GM10248 (cell line): ENCODE measurements at regions of chr3 and their contacts with region 1.

Region 1: DNA sequence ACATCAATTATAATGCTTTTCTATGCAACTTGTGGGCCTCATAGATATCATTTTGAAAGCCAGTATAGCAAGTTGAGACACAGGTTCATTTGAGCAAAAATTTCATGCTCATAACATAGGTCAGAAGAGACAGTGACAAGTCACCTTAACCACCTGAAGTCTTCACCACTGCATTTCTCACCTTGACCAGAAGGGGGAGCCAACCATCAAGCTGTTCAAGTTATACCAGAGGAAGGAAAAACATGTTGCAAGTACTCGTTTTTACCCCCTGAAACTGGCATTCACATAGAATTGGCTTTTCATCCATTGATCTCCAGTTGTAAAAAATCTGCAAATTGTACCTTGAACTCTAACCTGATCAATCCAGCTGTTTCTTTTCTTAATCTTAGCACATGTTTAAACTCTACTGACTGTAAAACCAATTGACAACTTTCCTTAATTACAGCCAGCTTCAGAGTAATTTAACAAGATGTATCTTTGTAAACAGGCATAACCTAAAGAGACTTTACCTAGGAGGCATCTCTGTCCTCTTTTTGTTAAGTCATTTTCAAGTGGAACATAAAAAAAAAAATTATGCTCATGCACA is 1.4 kb downstream of the LMOD3 start:
- DNase-seq: peak; percentile 46
- CTCF ChIP-seq: peak; percentile 95

Region 2: GRCh38 chr3:69092030-69092516 is 28.9 kb before region 1 on chr3:
- CTCF ChIA-PET with region 1: interaction called, 19 read pairs
- POLR2A ChIA-PET with region 1: no interaction called
- DNase-seq: no peak
- CTCF ChIP-seq: no peak

Region 3: GRCh38 chr3:69104996-69105719 is 15.8 kb before region 1 on chr3:
- CTCF ChIA-PET with region 1: interaction called, 36 read pairs
- POLR2A ChIA-PET with region 1: no interaction called
- DNase-seq: no peak
- CTCF ChIP-seq: no peak

Region 4: DNA sequence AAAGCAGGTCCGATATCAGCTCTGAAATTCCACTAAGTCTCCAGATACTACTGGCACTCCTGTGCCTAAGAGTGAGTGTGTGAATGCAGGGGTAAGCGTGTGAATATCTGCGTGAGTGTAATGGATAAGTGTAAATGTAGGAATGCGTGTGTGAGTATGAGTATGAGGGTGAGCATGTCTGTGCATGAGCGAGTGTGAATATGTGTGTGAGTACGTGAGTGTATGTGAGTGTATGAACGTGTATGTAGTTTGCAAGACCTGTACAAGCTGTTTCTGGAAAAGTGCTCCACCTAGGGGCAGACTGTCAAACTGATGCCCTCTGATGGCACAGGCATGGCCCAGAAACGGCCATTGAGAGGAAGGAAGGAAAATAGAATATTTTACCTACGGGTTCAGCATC is 289.3 kb after region 1 on chr3:
- CTCF ChIA-PET with region 1: interaction called, 18 read pairs
- POLR2A ChIA-PET with region 1: no interaction called
- DNase-seq: peak; percentile 43
- CTCF ChIP-seq: peak; percentile 90

Region 5: DNA sequence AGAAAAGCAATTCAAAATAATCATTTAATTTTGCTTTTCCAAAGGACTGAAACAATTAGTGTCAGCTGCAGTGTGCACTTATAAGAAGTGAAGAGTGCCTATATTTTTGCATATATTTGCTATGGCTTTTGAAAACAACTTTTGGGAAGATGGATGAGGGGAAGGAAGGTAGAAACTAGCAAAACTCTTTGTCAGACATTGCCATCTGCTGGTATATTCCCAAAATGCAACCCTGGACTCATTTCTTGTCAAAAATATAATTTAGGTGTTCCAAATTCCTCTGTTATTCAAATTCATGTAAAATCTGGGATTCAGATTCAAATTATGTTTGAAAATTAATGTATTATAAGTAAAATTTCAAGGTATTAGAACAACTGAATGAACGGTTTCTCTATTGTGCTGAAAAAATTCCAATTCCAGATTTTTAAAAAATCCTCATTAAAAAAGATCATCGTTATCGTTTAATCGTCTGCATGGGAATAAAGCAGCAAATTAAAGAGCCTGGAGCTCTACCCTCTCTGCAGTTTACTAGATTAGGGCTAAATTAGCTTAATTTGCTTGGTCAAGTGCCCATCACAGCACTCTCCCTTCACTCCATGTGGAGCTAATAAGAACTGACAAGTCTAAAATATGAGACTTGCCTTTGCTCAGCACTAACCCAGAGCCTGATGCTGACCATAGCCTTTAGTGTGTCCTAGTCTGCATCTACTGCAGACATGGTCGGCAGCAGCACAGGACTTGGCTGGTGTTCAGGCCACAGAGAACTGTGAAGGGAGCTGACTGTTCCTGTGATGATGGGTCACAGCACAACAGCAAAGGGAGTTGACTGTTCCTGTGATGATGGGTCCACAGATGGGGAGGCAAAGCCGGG is 550.3 kb after region 1 on chr3:
- CTCF ChIA-PET with region 1: interaction called, 17 read pairs
- POLR2A ChIA-PET with region 1: no interaction called
- DNase-seq: peak; percentile 44
- CTCF ChIP-seq: peak; percentile 53